ENCODE measurements at regions of chr15 and their contacts with region 1.

Region 1: GRCh38 chr15:74906446-74907162 is at the start of gene FAM219B:
- DNase-seq: peak; percentile 90 to 98
- ATAC-seq: peak; percentile 88 to 93
- H3K4me3 ChIP-seq: peak within 1 kb of the TSS; percentile 78
- H3K27ac ChIP-seq: peak within 1 kb of the TSS; percentile 92
- H3K4me1 ChIP-seq: peaks cover 13% of the 10 kb centered on the region
- CTCF ChIP-seq: no peak
- EP300 ChIP-seq: no peak
- POLR2A ChIP-seq: peak; percentile 89
- RAD21 ChIP-seq: no peak
- polyA plus RNA-seq, gene FAM219B: 46.2 and 65.3 TPM in 2 replicates

Region 2: GRCh38 chr15:74709011-74709410 is 197.6 kb before region 1 on chr15:
- CTCF ChIA-PET with region 1: no interaction called
- POLR2A ChIA-PET with region 1: no interaction called
- DNase-seq: no peak
- ATAC-seq: no peak
- H3K4me3 ChIP-seq: no peak overlapping the region
- H3K27ac ChIP-seq: no peak overlapping the region
- H3K4me1 ChIP-seq: no peaks in the 10 kb centered on the region
- CTCF ChIP-seq: no peak
- EP300 ChIP-seq: no peak
- POLR2A ChIP-seq: no peak
- RAD21 ChIP-seq: no peak

Region 3: GRCh38 chr15:74768771-74769342 is 137.7 kb before region 1 on chr15:
- CTCF ChIA-PET with region 1: interaction called, 56 read pairs
- POLR2A ChIA-PET with region 1: no interaction called
- DNase-seq: peak; percentile 71 to 93
- ATAC-seq: peak; percentile 60 to 73
- H3K4me3 ChIP-seq: peak overlapping the region; percentile 26; the same call in 2 of the 3 replicates
- H3K27ac ChIP-seq: peak overlapping the region; percentile 41 to 57; a peak in 4 of 6 replicates
- H3K4me1 ChIP-seq: peaks cover 7% of the 10 kb centered on the region; the same call in 2 of the 3 replicates
- CTCF ChIP-seq: peak; percentile 95
- EP300 ChIP-seq: no peak
- POLR2A ChIP-seq: no peak
- RAD21 ChIP-seq: peak; percentile 97

Region 4: GRCh38 chr15:74863239-74864056 is 43.2 kb before region 1 on chr15:
- CTCF ChIA-PET with region 1: interaction called, 12 read pairs
- POLR2A ChIA-PET with region 1: no interaction called
- DNase-seq: no peak
- ATAC-seq: peak; percentile 49 to 57; a peak in 4 of 6 replicates
- H3K4me3 ChIP-seq: no peak overlapping the region
- H3K27ac ChIP-seq: peak overlapping the region in 1 of 2 experiments; percentile 53; a peak in 3 of 6 replicates
- H3K4me1 ChIP-seq: peaks cover 48% of the 10 kb centered on the region
- CTCF ChIP-seq: no peak
- EP300 ChIP-seq: no peak
- POLR2A ChIP-seq: no peak
- RAD21 ChIP-seq: no peak

Region 5: DNA sequence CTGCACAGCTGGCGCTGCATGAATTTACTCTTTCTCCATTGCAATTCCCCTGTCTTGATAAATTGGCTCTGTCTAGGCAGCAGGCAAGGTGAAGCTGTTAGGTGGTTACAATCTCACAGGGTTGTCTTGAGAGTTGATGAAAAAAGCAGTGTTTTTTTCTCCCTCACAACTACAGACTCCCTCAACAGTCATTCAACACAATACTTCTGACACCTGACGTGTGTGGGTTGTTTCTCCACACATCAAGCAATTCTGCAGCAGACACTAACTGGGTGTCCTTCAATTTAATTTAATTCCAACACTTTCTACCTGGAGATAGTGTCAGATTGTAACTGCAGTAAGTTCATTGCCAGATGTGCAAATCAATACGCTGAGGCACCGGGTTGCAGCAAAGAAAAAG is 28.3 kb before region 1 on chr15:
- CTCF ChIA-PET with region 1: interaction called, 40 read pairs
- POLR2A ChIA-PET with region 1: interaction called, 7 read pairs
- DNase-seq: no peak
- ATAC-seq: no peak
- H3K4me3 ChIP-seq: no peak overlapping the region
- H3K27ac ChIP-seq: no peak overlapping the region
- H3K4me1 ChIP-seq: no peaks in the 10 kb centered on the region
- CTCF ChIP-seq: no peak
- EP300 ChIP-seq: no peak
- POLR2A ChIP-seq: no peak
- RAD21 ChIP-seq: no peak

Region 6: DNA sequence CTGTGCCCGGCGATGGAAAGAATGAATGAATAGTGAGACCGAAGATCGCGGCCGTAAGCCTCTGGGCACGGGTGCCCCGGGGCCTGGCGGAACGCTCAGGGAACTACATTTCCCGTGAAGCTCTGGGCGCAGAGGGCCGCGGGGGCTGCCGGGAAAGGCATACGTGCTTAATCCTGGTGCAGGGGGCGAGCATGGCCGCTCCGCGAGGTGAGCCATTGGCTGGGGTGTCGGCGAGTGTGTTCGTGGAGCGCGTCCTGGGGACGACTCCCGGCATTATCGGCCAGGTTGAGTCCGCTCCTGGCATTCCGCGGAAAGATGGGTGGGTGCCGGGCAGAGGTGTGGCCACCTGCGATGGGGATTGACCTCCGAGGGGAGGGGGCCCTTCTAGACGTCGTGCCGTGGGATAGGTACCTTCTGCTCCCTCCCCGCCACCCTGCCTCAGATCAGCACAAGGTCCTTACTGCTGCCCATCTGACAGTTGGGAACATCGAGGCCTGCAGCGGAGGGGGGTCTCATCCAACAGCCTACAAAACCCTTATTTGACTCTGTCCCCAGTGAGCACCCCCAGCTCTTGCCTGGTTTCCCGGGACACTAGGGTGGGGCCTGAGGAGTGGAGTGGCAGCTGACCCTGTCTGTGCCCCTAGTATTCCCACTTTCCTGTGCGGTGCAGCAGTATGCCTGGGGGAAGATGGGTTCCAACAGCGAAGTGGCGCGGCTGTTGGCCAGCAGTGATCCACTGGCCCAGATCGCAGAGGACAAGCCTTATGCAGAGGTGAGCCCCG is 16.5 kb before region 1 on chr15 and contains the start of gene MPI:
- CTCF ChIA-PET with region 1: interaction called, 92 read pairs
- POLR2A ChIA-PET with region 1: interaction called, 31 read pairs
- DNase-seq: peak; percentile 80 to 100
- ATAC-seq: peak; percentile 96 to 99
- H3K4me3 ChIP-seq: peak within 1 kb of the TSS; percentile 63
- H3K27ac ChIP-seq: peak within 1 kb of the TSS; percentile 78 to 90
- H3K4me1 ChIP-seq: peaks cover 9% of the 10 kb centered on the region; the same call in 1 of the 3 replicates
- CTCF ChIP-seq: no peak
- EP300 ChIP-seq: no peak
- POLR2A ChIP-seq: peak; percentile 99
- RAD21 ChIP-seq: no peak
- polyA plus RNA-seq, gene MPI: 53.7 and 74.4 TPM in 2 replicates

Region 7: GRCh38 chr15:74937596-74938296 is 31.1 kb after region 1 on chr15 and contains the start of gene COX5A:
- CTCF ChIA-PET with region 1: interaction called, 9 read pairs
- POLR2A ChIA-PET with region 1: interaction called, 14 read pairs
- DNase-seq: peak; percentile 93 to 99
- ATAC-seq: peak; percentile 95
- H3K4me3 ChIP-seq: peak within 1 kb of the TSS; percentile 65
- H3K27ac ChIP-seq: peak within 1 kb of the TSS; percentile 88 to 95
- H3K4me1 ChIP-seq: peaks cover 9% of the 10 kb centered on the region; the same call in 1 of the 3 replicates
- CTCF ChIP-seq: no peak
- EP300 ChIP-seq: no peak
- POLR2A ChIP-seq: peak; percentile 96
- RAD21 ChIP-seq: no peak
- polyA plus RNA-seq, gene COX5A: 328 and 391 TPM in 2 replicates

Region 8: GRCh38 chr15:74956648-74957300 is 50.2 kb after region 1 on chr15 and contains the start of gene RPP25:
- CTCF ChIA-PET with region 1: interaction called, 48 read pairs
- POLR2A ChIA-PET with region 1: interaction called, 8 read pairs
- DNase-seq: peak; percentile 86 to 94
- ATAC-seq: peak; percentile 87 to 93
- H3K4me3 ChIP-seq: peak within 1 kb of the TSS; percentile 53
- H3K27ac ChIP-seq: peak within 1 kb of the TSS; percentile 82 to 92
- H3K4me1 ChIP-seq: peaks cover 44% of the 10 kb centered on the region
- CTCF ChIP-seq: no peak
- EP300 ChIP-seq: no peak
- POLR2A ChIP-seq: peak; percentile 95
- RAD21 ChIP-seq: 0 out of 5 replicates have a peak, but pooled peaks have one; percentile 2 to 9
- polyA plus RNA-seq, gene RPP25: 8.8 and 9.3 TPM in 2 replicates

Region 9: GRCh38 chr15:75042730-75043508 is 136.3 kb after region 1 on chr15:
- CTCF ChIA-PET with region 1: no interaction called
- POLR2A ChIA-PET with region 1: no interaction called
- DNase-seq: peak; percentile 57 to 76
- ATAC-seq: peak; percentile 82 to 87
- H3K4me3 ChIP-seq: no peak overlapping the region
- H3K27ac ChIP-seq: peak overlapping the region; percentile 34 to 69
- H3K4me1 ChIP-seq: peaks cover 33% of the 10 kb centered on the region
- CTCF ChIP-seq: peak; percentile 58
- EP300 ChIP-seq: no peak
- POLR2A ChIP-seq: no peak
- RAD21 ChIP-seq: peak; percentile 80 to 83

Region 10: DNA sequence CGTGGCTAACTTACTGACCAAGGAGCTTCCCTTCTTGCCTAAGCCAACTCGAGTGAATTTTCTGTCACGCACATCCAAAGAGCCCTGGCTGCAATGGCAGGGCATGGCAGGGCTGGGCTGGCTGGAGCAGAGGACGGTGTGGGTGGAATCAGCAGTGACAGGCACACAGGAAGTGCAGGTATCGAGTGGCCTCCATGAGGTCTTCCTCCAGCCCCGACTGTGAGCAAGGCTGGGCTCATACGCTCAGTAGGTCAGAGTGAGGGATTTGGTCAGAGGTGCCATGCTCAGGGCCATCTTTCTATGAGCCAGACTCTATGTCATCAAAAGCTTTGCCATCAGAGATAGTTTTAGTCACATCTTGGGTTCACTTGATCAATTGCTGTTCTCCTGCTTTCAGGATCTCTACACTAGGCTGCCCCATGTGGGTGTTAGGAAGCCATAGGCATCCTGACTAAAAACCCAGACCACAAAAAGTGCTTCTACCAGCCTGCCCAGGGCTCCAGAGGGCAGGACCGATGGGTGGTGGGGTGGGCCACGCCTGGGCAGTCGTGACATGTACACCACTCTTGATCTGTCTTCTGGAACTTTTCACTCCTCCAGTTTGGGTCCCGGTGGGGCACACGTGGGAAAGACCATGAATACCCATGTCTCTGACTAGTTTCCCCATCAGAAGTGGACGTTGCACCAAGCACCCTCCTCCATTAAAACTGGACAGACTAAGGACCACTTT is 406.7 kb after region 1 on chr15:
- CTCF ChIA-PET with region 1: no interaction called
- POLR2A ChIA-PET with region 1: no interaction called
- DNase-seq: no peak
- ATAC-seq: no peak
- H3K4me3 ChIP-seq: no peak overlapping the region
- H3K27ac ChIP-seq: no peak overlapping the region
- H3K4me1 ChIP-seq: no peaks in the 10 kb centered on the region
- CTCF ChIP-seq: no peak
- EP300 ChIP-seq: no peak
- POLR2A ChIP-seq: no peak
- RAD21 ChIP-seq: no peak

Measured in A549 (cell line).